ENCODE measurements at regions of chr15 and their contacts with region 1.

Region 1: GRCh38 chr15:78004919-78005634 is 72.4 kb downstream of the TBC1D2B start:
- DNase-seq: peak; percentile 94

Region 2: DNA sequence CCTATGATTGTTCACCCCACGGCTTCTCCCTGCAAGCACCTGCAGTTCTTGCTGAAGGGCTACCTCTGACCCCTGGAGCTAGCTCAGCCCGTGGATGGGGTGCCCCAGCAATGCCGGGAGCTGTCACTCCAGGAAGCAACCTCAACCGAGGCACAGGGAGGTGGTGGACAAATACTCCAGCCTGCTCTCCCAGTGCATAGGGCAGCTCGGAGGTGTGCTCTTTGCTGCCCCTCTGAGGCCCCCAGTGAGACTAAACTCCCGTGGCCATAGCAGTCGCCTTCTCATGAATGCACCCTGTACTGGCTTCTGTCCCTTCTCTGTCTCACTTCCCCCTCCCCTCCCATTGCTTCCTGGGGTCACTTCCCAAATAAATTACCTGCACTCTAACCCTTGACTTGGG is 420.9 kb before region 1 on chr15:
- intact Hi-C with region 1: no loop called
- DNase-seq: no peak

Region 3: GRCh38 chr15:78077058-78077877 is 72.2 kb after region 1 on chr15 and contains the start of gene TBC1D2B:
- intact Hi-C with region 1: loop called in 1 of 2 experiments (anchors 5 kb)
- DNase-seq: peak; percentile 89
- total RNA-seq, gene TBC1D2B: 46.5 to 57.9 TPM

Region 4: GRCh38 chr15:79015416-79015815 is 1010.3 kb after region 1 on chr15:
- intact Hi-C with region 1: no loop called
- DNase-seq: no peak

Measured in posterior vena cava (tissue), 2 donors.